ENCODE measurements at regions of chr10 and their contacts with region 1.

Region 1: GRCh38 chr10:96017191-96017687 is 26.1 kb upstream of the CCNJ start:
- DNase-seq: peak; percentile 65
- ATAC-seq: peak; percentile 95
- H3K4me3 Mint-ChIP-seq: no peak overlapping the region
- H3K27ac Mint-ChIP-seq: no peak overlapping the region
- H3K4me1 Mint-ChIP-seq: no peaks in the 10 kb centered on the region
- H3K27me3 Mint-ChIP-seq: peaks cover 2% of the 10 kb centered on the region

Region 2: DNA sequence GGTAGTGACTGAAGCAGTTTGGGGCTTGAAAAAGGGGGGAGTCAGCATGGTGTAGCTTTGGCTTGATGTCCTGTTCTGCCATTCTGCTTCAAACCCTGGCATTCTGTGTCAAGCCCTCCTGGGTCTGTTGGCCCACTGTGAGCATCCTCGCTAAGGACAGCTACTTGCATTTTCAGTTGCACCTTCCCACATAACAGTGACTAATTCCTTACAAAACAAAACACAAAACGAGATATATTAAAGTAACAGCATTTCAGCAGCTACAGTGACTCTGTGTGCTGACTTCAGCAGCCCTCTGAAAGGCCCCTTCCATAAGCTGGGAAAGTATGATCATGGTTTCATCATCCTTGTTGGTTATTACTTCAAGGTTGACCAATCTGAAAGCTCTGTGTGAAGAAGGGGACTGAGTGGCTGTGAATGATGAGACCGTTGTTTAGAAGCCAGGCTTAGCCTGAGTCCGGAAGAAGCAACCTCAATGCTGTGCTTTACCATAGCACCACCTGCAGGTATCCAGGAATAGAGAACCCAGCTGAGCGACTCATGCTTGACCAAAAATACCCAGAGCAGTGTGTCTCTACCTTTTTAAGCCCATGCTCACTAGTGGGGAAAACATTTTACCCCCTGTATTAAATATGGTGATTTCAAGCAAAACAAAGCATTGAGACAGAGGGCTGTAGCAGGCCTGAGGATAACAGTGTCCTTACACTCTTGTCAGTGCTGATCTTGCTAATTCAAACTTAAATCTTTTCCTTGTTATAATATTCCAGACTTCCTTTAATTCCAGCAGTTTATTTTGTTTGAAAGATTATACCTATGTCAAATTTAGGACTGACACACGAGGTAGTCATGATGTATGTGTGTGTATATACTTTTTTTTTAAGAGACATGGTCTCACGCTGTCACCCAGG is 152.1 kb before region 1 on chr10:
- CTCF ChIA-PET with region 1: no interaction called
- POLR2A ChIA-PET with region 1: no interaction called
- DNase-seq: peak; percentile 72
- ATAC-seq: peak; percentile 90
- H3K4me3 Mint-ChIP-seq: no peak overlapping the region
- H3K27ac Mint-ChIP-seq: peak overlapping the region; percentile 74
- H3K4me1 Mint-ChIP-seq: peaks cover 36% of the 10 kb centered on the region
- H3K27me3 Mint-ChIP-seq: no peaks in the 10 kb centered on the region

Region 3: DNA sequence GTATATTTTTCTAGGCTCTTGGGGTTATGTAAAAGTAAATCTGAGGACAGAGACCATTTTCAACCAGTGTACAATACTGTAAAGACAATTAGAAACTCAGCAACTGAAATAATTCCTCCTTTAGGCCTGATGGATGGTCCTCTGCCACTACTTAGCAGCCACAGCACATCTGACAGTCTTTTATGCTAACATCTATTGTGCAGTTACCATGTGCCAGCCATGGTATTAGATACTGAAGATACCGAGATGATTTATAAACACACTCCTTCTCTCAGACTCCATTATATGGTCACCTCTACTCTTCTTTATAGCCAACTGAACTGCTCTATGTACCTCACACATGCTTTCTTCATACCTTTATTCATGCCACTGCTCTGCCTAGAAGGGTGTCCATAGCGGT is 35.0 kb before region 1 on chr10:
- CTCF ChIA-PET with region 1: no interaction called
- POLR2A ChIA-PET with region 1: no interaction called
- DNase-seq: no peak
- ATAC-seq: no peak
- H3K4me3 Mint-ChIP-seq: no peak overlapping the region
- H3K27ac Mint-ChIP-seq: no peak overlapping the region
- H3K4me1 Mint-ChIP-seq: no peaks in the 10 kb centered on the region
- H3K27me3 Mint-ChIP-seq: no peaks in the 10 kb centered on the region

Region 4: GRCh38 chr10:95998255-95998784 is 18.9 kb before region 1 on chr10:
- CTCF ChIA-PET with region 1: interaction called, 11 read pairs
- POLR2A ChIA-PET with region 1: no interaction called
- DNase-seq: no peak
- ATAC-seq: no peak
- H3K4me3 Mint-ChIP-seq: no peak overlapping the region
- H3K27ac Mint-ChIP-seq: no peak overlapping the region
- H3K4me1 Mint-ChIP-seq: no peaks in the 10 kb centered on the region
- H3K27me3 Mint-ChIP-seq: no peaks in the 10 kb centered on the region

Region 5: GRCh38 chr10:96287392-96288105 is 270.3 kb after region 1 on chr10:
- CTCF ChIA-PET with region 1: interaction called, 63 read pairs
- POLR2A ChIA-PET with region 1: no interaction called
- DNase-seq: no peak
- ATAC-seq: no peak
- H3K4me3 Mint-ChIP-seq: peak overlapping the region; percentile 12
- H3K27ac Mint-ChIP-seq: no peak overlapping the region
- H3K4me1 Mint-ChIP-seq: peaks cover 14% of the 10 kb centered on the region
- H3K27me3 Mint-ChIP-seq: peaks cover 3% of the 10 kb centered on the region

Region 6: GRCh38 chr10:96292971-96293920 is 276.0 kb after region 1 on chr10:
- CTCF ChIA-PET with region 1: interaction called, 63 read pairs
- POLR2A ChIA-PET with region 1: no interaction called
- DNase-seq: peak; percentile 30
- ATAC-seq: no peak
- H3K4me3 Mint-ChIP-seq: no peak overlapping the region
- H3K27ac Mint-ChIP-seq: no peak overlapping the region
- H3K4me1 Mint-ChIP-seq: peaks cover 13% of the 10 kb centered on the region
- H3K27me3 Mint-ChIP-seq: peaks cover 9% of the 10 kb centered on the region

Region 7: GRCh38 chr10:96334616-96335526 is 317.6 kb after region 1 on chr10:
- CTCF ChIA-PET with region 1: interaction called, 22 read pairs
- POLR2A ChIA-PET with region 1: no interaction called
- DNase-seq: no peak
- ATAC-seq: no peak
- H3K4me3 Mint-ChIP-seq: no peak overlapping the region
- H3K27ac Mint-ChIP-seq: no peak overlapping the region
- H3K4me1 Mint-ChIP-seq: peaks cover 5% of the 10 kb centered on the region
- H3K27me3 Mint-ChIP-seq: peaks cover 4% of the 10 kb centered on the region

Region 8: DNA sequence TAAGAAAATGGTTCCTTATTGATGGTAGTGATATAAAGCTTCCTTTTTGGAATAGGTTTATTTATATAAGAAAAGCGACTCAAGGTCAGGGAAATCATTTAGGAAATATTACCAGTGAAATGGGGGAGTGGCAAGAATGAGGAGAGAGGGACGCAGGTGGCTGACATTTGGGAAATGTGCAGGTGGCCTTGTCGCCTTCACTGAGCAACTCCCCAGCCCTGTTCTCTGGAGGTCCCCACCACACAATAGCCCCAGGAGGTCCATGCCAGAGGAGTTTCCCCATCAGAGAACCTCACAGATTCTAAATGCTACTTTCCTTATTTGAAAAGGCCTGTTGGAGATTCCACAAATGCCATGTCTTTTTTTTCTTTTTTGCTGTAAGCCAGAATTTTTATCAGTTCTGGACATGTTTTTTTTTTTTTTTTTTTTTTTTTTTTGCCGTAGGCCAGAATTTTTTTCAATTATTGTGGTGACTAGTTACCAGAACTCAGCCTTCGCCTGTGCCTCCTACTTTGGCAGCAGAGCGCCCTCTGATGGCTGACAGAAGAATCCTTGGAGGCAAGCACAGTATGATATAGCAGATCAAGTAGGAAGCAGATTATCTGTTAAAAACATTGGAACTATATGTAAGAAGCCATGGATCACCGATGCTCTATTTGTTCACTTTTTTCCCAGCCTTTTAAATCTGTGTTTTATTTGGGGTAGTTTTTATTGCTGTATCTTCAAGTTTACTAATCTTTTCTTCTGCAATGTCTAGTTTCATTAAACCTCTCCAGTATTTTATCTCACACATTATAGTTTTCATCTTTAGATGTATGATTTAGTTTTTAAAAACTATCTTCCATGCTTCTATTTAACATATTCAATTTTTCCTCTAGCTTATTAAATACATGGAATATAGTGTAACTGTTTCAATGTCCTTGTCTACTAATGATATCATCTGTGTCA is 323.0 kb after region 1 on chr10:
- CTCF ChIA-PET with region 1: interaction called, 22 read pairs
- POLR2A ChIA-PET with region 1: no interaction called
- DNase-seq: peak; percentile 71
- ATAC-seq: peak; percentile 76
- H3K4me3 Mint-ChIP-seq: no peak overlapping the region
- H3K27ac Mint-ChIP-seq: no peak overlapping the region
- H3K4me1 Mint-ChIP-seq: no peaks in the 10 kb centered on the region
- H3K27me3 Mint-ChIP-seq: no peaks in the 10 kb centered on the region

Measured in activated CD8-positive, alpha-beta T cell treated with anti-CD3 and anti-CD28 coated beads, Interleukin-2, amount 10 ng/mL, durations not matched to agents 7 days and 5 days (primary cell).